ENCODE measurements at regions of chr2 and their contacts with region 1.

Region 1: DNA sequence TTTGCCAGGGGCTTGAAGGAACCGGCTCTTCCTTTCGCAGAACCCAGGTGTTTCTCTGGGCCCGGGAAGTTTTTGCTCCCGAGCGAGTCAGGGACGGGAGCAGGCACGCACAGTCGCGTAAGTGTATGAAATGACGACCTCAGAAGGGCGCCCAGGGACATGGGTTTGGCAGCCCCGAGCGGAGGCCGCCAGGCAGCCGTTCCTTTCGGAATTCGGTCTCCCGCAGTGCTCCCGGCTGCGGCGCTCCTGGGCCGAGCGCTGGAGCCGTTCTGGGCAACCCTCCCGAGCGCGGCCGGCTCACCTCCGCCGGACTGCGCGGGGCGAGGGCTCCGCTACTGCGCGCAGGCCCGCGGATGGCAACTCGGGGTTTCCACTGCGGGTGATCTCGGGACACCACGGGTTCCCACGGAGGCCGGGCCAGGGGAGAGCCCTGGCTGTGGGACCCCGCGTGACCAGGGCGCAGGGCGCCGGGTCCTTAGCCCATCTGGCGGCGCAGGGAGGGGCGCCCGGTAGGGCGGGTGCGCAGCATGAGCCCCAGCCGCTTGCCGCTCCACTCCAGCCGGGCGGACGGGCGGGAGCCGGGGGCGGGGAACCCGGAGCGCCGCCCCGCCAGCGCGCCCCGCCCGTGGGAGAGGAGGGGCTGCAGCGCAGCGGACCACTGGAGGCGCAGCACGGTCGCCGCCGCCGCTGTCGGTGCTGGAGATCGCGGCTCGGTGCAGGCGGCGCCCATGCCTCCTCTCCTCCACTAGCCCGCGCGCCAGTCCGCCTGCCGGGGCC is at the start of gene OSBPL6:
- DNase-seq: peak; percentile 84
- total RNA-seq, gene OSBPL6: 5.5 TPM

Region 2: GRCh38 chr2:178112202-178113152 is 81.5 kb before region 1 on chr2 and contains the start of gene RBM45:
- intact Hi-C with region 1: loop called (anchors 5 kb)
- DNase-seq: peak; percentile 94
- total RNA-seq, gene RBM45: 5.2 TPM

Region 3: DNA sequence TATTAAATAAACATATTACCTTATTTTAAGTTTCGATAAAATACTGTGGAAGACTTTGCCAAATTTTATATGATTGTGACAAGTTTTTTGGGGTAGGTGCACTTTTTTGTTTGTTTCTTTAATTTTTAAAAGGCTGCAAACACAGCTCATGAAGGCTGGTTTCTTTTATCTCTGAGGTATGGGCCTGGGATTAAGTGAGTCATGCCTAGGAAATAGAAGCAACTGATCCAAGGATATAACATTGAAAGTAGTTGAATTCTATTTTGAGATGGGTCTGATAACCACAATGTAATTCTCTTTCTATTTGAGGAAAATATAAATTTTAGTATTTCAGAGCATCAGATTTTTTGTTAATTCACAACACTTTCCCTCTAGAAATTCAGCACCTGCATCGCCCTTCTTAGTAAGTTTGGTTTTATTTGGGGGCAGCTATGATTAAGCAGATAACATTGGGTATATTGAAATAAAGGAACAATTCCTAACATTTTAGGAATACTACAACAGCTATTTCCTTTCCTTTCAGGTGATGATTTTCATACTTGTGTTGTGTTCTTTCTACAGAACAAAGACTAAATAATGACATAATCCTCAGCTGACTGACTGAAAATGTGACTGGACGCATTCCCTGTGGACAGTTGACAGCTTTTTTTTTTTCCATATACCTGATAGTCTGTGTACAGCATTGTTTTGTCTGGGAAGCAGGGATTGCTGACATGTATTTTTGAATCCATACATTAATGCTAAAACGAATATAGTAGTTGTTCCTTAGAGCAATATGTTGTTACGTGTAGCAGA is 65.0 kb before region 1 on chr2:
- intact Hi-C with region 1: loop called (anchors 5 kb)
- DNase-seq: no peak

Region 4: GRCh38 chr2:178238144-178238521 is 44.1 kb after region 1 on chr2:
- intact Hi-C with region 1: loop called (anchors 5 kb)
- DNase-seq: no peak

Region 5: DNA sequence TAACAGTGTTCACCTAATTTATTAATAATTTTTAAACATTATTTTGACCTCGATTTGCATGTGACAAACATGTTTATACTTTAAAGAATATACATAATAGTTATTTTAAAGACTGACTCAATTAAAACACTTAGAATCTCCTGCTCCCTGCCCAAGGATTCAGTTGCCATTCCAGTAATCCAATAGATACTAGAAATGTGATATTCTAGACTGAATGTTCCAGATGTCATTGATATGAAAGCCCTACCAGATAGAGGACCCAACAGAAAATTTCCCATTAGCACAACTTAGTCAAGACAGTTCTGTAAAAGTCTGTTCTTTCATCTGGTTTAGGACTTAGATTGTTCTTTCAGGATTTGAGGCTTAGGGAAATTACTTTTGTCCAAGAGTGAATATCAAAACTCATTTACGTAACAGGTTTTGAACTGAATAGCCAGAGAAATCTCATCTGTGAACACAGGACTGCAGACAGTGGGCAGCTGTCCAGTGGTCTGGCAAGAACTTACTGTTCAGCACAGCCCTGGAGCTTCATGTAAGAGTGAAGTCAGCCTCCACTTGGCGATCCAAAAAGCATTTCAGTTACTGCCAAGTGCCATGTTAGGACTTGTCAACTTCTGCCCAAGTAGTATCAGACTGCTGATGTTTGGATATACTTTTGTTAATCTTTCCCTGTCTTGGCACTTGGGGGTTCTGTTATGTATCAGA is 77.8 kb after region 1 on chr2:
- intact Hi-C with region 1: loop called (anchors 5 kb)
- DNase-seq: peak; percentile 83

Region 6: GRCh38 chr2:178414266-178415247 is 220.5 kb after region 1 on chr2:
- intact Hi-C with region 1: loop called (anchors 10 kb)
- DNase-seq: peak; percentile 94

Region 7: DNA sequence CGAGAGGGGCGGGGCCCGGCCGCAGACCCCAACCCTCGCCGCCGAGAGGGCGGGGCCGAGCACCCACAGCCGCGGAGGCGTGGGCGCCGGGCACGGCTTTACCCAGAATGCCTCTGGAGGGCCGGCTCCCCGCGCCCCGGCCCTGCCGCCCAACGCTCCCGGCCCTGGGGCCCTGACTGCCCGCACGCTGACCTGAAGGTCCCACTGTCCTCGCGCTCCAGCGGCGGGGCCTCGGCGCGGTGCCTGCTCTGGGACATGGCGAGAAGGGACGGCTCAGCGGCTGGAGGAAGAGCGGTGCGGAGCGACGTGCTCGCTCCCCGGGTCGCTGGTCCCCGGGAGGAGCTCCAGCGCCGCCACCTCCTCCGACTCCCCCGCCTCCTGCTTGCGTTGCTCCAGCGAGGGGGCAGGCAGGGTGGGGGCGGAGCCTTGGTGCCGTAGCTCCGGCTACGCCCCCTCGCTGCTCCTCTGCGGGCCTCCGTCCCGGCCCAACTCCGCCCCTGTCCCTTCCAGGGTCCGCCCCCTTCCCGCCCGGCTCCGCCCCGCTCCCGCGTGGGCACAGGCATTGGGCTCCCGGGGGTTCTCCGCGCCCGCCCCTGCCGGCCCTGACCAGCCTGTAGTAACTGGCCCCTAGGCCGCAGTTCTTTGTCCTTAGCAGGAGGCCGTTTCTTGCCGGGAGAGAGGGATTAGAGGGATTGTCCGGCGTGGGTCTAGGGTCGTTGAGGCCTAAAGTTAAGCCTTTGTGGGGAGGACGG is 256.9 kb after region 1 on chr2 and contains the starts of genes PJVK and PRKRA:
- intact Hi-C with region 1: loop called (anchors 1 kb)
- DNase-seq: peak; percentile 99
- total RNA-seq, gene PJVK: 1.6 TPM
- total RNA-seq, gene PRKRA: 46.7 TPM

Measured in cardiac septum (tissue), 1 donor.